Posterior cingulate gyrus (tissue), 11 donors: ENCODE measurements at regions of chr6 and their contacts with region 1.

Region 1: GRCh38 chr6:166382933-166383801 is at the start of gene MPC1:
- DNase-seq: peak; percentile 92 to 99 (median 96)

Region 2: GRCh38 chr6:166156942-166157341 is 226.2 kb before region 1 on chr6:
- intact Hi-C with region 1: no loop called
- DNase-seq: no peak

Region 3: GRCh38 chr6:166308033-166308768 is 75.0 kb before region 1 on chr6 and contains the start of gene PRR18:
- intact Hi-C with region 1: loop called (anchors 2 kb)
- DNase-seq: peak; percentile 68 to 97 (median 78)

Region 4: GRCh38 chr6:166330612-166331011 is 52.6 kb before region 1 on chr6:
- intact Hi-C with region 1: loop called (anchors 2 kb)
- DNase-seq: peak; percentile 50 to 97 (median 82)

Region 5: DNA sequence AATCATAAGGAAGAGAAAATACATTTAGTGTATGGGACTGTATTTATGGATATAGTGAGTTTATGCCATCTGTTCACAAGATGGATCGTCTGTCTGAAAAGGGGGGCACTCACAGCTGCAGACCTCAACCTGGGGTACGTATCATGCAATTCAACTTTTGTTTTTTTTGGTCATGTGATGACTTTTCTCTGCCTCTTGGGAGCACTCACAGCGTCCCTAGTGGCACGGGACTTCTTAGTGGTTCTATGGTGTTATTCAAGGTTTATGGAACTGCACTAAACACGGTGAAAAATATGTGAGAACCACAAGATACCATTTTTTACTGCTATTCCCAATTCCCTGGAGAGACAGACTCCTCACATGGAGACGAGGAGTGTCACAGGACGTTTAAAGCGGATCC is 60.0 kb after region 1 on chr6:
- intact Hi-C with region 1: no loop called
- DNase-seq: peak in 3 of 10 donors; percentile 2 to 27 (median 25)